Activated CD4-positive, alpha-beta memory T cell treated with anti-CD3 and anti-CD28 coated beads, Interleukin-2, amount 10 ng/mL, durations not matched to agents 7 days and 5 days (primary cell): ENCODE measurements at regions of chr11 and their contacts with region 1.

Region 1: DNA sequence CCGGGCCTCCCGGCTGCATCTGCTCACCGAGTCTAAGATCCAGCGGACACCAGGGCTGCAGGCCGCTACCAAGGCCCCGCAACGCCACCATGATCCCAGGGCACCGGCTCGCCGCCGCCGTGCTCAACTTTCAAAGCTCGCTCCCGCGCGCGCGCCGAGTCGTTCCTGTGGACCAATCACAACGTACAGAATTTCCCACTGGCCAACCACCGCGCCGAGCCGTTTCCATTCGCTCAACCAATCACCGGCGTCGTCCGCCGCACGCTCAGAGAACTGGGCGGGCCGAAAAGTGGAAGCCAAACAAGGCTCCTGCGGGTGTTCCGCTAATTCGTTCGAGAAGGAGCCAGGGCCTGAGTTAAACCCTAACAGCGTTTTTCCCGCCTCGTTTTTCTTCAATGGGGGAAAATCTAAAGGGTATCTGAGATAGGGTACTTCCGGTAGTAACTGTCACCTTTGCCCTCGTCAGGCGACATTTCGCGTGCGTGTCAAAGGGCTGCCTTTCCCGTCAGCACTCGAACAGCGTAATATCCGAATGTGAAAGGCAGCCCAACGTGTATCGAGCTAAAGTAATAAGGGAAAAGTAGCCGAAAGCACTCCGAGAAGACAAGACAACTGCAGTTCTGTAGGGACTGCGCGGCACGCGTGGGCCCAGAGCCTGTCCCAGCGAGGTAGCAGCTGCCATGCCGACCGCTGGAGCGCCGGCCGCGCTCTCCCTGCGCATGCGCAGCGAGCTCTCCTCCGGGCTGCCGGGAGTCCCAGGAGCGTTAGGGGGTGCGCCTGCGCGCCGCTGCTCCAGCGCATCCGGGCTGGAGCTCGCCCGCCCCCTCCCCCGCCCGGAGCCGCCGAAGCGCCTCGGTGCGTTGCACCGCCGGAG is at the starts of genes NCAPD3 and VPS26B:
- DNase-seq: peak; percentile 97
- H3K4me3 Mint-ChIP-seq: peak within 1 kb of the TSS; percentile 95
- H3K27ac Mint-ChIP-seq: peak within 1 kb of the TSS; percentile 97
- H3K4me1 Mint-ChIP-seq: peaks cover 71% of the 10 kb centered on the region
- H3K27me3 Mint-ChIP-seq: no peaks in the 10 kb centered on the region
- total RNA-seq, gene NCAPD3: 94.4 to 97.2 TPM
- total RNA-seq, gene VPS26B: 60.4 to 63.9 TPM

Region 2: GRCh38 chr11:134181707-134182106 is 42.4 kb before region 1 on chr11:
- CTCF ChIA-PET with region 1: interaction called, 3 read pairs
- POLR2A ChIA-PET with region 1: interaction called, 10 read pairs
- DNase-seq: no peak
- H3K4me3 Mint-ChIP-seq: no peak overlapping the region
- H3K27ac Mint-ChIP-seq: no peak overlapping the region
- H3K4me1 Mint-ChIP-seq: no peaks in the 10 kb centered on the region
- H3K27me3 Mint-ChIP-seq: no peaks in the 10 kb centered on the region

Region 3: DNA sequence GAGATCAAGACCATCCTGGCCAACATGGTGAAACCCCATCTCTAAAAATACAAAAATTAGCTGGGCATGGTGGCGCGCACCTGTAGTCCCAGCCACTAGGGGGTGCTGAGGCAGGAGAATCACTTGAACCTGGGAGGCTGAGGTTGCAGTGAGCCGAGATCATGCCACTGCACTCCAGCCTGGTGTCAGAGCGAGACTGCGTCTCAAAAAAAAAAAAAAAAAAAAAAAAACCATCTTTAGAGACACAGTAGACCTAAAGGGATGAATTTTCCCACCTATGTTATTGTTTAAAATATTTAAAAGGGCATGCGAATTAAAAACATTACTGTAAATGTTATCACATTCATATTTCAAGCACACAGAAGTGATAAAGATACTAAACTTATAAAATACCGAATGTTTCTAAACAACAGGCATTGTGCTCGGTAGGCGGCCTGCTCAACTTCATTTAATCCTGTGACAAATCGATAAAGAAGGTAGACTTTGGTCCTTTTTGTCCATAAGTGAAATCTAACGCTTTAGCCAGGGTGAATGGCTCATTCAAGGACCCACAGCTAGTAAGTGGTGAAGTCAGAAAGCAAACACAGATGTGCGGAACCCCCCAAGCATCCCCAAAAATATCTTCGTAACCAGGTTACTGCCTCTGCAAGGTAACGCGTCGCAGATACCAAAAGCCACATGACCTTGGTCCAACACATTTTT is 16.4 kb before region 1 on chr11:
- CTCF ChIA-PET with region 1: interaction called, 35 read pairs
- POLR2A ChIA-PET with region 1: interaction called, 32 read pairs
- DNase-seq: peak; percentile 74
- H3K4me3 Mint-ChIP-seq: no peak overlapping the region
- H3K27ac Mint-ChIP-seq: no peak overlapping the region
- H3K4me1 Mint-ChIP-seq: peaks cover 6% of the 10 kb centered on the region
- H3K27me3 Mint-ChIP-seq: no peaks in the 10 kb centered on the region

Region 4: DNA sequence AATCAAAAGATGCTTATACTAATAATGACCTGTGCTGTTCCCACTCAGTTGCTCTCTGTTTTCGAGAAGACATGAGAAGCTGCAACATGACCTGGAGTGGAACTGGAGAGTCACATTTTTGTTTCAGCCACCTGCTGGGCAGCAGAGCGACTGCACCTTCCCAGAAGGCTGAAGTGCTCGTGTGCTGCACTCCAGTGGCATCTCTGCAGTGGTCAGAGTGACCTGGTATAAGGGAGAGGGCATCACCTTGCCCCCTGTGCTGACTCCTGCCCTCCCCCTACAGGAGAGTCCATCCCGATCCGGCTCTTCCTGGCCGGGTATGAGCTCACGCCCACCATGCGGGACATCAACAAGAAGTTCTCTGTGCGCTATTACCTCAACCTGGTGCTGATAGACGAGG is 20.6 kb after region 1 on chr11:
- CTCF ChIA-PET with region 1: interaction called, 13 read pairs
- POLR2A ChIA-PET with region 1: interaction called, 116 read pairs
- DNase-seq: no peak
- H3K4me3 Mint-ChIP-seq: no peak overlapping the region
- H3K27ac Mint-ChIP-seq: no peak overlapping the region
- H3K4me1 Mint-ChIP-seq: peaks cover 13% of the 10 kb centered on the region
- H3K27me3 Mint-ChIP-seq: no peaks in the 10 kb centered on the region

Region 5: GRCh38 chr11:134270250-134270714 is 46.2 kb after region 1 on chr11:
- CTCF ChIA-PET with region 1: interaction called, 31 read pairs
- POLR2A ChIA-PET with region 1: interaction called, 51 read pairs
- DNase-seq: peak; percentile 68
- H3K4me3 Mint-ChIP-seq: peak overlapping the region; percentile 39
- H3K27ac Mint-ChIP-seq: peak overlapping the region; percentile 67
- H3K4me1 Mint-ChIP-seq: peaks cover 75% of the 10 kb centered on the region
- H3K27me3 Mint-ChIP-seq: no peaks in the 10 kb centered on the region

Region 6: DNA sequence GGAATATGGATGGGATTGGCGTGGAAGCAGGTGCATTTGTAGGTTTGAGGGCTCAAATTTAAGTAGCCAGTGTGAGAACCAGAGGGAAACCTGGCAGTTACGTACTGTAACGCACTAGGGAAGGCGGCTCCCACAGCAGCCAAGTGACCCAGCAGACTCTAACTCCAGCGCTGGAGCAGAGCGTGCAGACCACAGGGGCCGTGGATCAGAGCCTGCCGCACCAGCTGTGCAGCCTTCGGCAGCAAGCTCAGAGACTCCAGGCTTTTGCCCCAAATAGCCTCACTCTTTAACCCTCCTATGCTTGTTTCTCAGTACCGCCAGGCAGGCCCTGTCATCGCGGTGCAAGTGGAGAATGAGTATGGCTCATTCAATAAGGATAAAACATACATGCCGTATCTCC is 64.4 kb after region 1 on chr11:
- CTCF ChIA-PET with region 1: no interaction called
- POLR2A ChIA-PET with region 1: no interaction called
- DNase-seq: no peak
- H3K4me3 Mint-ChIP-seq: no peak overlapping the region
- H3K27ac Mint-ChIP-seq: no peak overlapping the region
- H3K4me1 Mint-ChIP-seq: no peaks in the 10 kb centered on the region
- H3K27me3 Mint-ChIP-seq: no peaks in the 10 kb centered on the region